ENCODE measurements at regions of chr1 and their contacts with region 1.

Region 1: GRCh38 chr1:157156058-157156541 is 17.9 kb upstream of the ETV3 start:
- DNase-seq: peak; percentile 78 to 88 (median 82)
- ATAC-seq: peak; percentile 84
- H3K4me3 ChIP-seq: peak overlapping the region; percentile 21; the same call in 1 of the 2 replicates
- H3K27ac ChIP-seq: no peak overlapping the region
- H3K4me1 ChIP-seq: peaks cover 29 to 44% of the 10 kb centered on the region in 2 experiments
- H3K27me3 ChIP-seq: peaks cover 9 to 42% of the 10 kb centered on the region in 2 experiments
- CTCF ChIP-seq: peak; percentile 92 to 96 (median 96)
- EP300 ChIP-seq: no peak
- POLR2A ChIP-seq: no peak
- RAD21 ChIP-seq: peak; percentile 98 to 99

Region 2: DNA sequence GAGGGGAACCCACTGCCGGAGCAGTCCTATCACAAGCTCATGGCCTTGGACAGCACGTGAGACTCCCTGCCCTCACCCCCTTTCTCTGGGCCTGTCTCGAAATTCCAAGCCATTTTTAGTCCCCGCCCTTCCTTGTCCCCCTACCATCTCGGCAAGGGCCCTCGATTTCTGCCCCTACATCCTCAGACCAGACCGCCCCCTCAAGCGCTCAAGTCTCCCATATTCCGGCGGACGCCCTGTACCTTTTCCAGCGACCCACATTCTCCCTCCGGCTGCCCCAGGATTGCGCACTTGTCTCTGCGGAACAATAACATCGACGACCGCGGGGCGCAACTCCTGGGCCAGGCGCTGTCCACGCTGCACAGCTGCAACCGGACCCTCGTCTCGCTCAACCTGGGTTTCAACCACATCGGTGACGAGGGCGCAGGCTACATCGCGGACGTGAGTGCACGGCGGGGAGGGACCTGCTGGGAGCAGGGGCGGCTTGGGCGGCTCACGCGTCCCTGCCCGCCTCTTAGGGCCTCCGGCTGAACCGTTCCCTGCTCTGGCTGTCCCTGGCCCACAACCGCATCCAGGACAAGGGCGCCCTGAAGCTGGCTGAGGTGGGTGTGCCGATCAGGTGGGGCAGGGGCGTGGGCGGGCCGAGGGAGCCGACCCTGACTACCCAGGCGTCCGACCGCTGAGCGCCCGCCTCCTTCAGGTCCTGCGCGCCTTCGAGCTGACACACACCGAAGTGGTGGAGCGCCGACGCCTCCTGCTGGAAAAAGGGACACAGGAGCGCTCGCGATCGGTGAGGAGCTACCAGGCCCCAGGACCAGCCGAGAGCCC is 228.7 kb before region 1 on chr1:
- CTCF ChIA-PET with region 1: no interaction called
- POLR2A ChIA-PET with region 1: no interaction called
- in situ Hi-C with region 1: no loop called
- intact Hi-C with region 1: loop called (anchors 5 kb)
- DNase-seq: peak; percentile 74 to 87 (median 78)
- ATAC-seq: peak; percentile 87
- H3K4me3 ChIP-seq: peak overlapping the region; percentile 30; the same call in 1 of the 2 replicates
- H3K27ac ChIP-seq: no peak overlapping the region; the same call in 2 of the 3 replicates
- H3K4me1 ChIP-seq: peaks cover 24 to 33% of the 10 kb centered on the region in 2 experiments
- H3K27me3 ChIP-seq: peaks cover 5 to 6% of the 10 kb centered on the region in 2 experiments; a peak in 2 of 5 replicates
- CTCF ChIP-seq: peak; percentile 77 to 92 (median 81)
- EP300 ChIP-seq: no peak
- POLR2A ChIP-seq: no peak
- RAD21 ChIP-seq: peak; percentile 77 to 78

Region 3: DNA sequence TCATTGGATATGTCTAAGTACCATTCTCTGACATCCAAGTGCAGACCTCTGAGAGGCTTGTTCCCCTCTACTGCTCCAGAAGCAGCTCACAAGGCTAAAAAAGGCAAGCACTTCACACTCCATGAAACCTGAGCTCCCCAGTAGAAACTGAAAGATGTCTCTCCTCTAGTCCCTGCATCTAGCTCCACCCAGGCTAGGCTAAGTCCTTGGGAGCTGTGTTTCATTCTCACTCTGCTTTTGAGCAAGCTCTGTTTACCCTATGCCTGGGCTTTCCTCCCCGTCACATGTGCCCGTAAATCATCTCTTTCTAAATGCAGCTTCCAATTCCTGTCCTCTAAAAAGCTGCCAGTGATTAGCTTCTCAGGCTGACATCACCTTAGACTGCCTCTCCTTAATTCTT is 196.7 kb before region 1 on chr1:
- CTCF ChIA-PET with region 1: no interaction called
- POLR2A ChIA-PET with region 1: no interaction called
- in situ Hi-C with region 1: loop called (anchors 10 kb)
- intact Hi-C with region 1: no loop called
- DNase-seq: peak in 2 of 4 experiments; percentile 43 to 44
- ATAC-seq: peak; percentile 56
- H3K4me3 ChIP-seq: no peak overlapping the region
- H3K27ac ChIP-seq: peak overlapping the region; percentile 23; the same call in 1 of the 3 replicates
- H3K4me1 ChIP-seq: peaks cover 15 to 41% of the 10 kb centered on the region in 2 experiments
- H3K27me3 ChIP-seq: no peaks in the 10 kb centered on the region
- CTCF ChIP-seq: no peak
- EP300 ChIP-seq: no peak
- POLR2A ChIP-seq: no peak
- RAD21 ChIP-seq: no peak

Region 4: DNA sequence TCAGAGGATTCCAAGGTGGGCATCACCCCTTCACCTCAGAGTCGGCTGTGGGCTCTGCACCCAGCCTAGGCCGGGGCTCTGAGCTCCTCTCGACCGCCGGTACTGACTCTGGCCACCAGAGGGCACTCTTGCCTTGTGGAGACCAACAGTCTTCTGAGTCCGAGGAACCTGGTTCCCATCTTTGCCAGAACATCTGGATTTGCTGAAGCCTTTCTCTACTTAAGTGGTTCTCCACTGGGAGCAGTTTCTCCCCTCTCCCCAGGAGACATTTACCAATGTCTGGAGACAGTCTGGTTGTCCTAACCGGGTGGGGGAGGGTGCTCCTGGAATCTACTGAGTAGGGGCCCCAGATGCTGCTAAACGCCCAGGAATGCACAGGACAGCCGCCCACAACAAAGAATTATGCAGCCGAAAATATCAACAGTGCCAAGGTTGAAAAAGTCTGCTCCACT is 65.9 kb before region 1 on chr1:
- CTCF ChIA-PET with region 1: interaction called, 133 read pairs
- POLR2A ChIA-PET with region 1: interaction called, 14 read pairs
- in situ Hi-C with region 1: no loop called
- intact Hi-C with region 1: loop called (anchors 1 kb)
- DNase-seq: peak; percentile 81 to 88 (median 87)
- ATAC-seq: peak; percentile 96
- H3K4me3 ChIP-seq: no peak overlapping the region
- H3K27ac ChIP-seq: no peak overlapping the region
- H3K4me1 ChIP-seq: peaks cover 2 to 4% of the 10 kb centered on the region in 2 experiments; a peak in 2 of 5 replicates
- H3K27me3 ChIP-seq: no peaks in the 10 kb centered on the region
- CTCF ChIP-seq: peak; percentile 92 to 96 (median 95)
- EP300 ChIP-seq: no peak
- POLR2A ChIP-seq: no peak
- RAD21 ChIP-seq: peak; percentile 98 to 99

Region 5: DNA sequence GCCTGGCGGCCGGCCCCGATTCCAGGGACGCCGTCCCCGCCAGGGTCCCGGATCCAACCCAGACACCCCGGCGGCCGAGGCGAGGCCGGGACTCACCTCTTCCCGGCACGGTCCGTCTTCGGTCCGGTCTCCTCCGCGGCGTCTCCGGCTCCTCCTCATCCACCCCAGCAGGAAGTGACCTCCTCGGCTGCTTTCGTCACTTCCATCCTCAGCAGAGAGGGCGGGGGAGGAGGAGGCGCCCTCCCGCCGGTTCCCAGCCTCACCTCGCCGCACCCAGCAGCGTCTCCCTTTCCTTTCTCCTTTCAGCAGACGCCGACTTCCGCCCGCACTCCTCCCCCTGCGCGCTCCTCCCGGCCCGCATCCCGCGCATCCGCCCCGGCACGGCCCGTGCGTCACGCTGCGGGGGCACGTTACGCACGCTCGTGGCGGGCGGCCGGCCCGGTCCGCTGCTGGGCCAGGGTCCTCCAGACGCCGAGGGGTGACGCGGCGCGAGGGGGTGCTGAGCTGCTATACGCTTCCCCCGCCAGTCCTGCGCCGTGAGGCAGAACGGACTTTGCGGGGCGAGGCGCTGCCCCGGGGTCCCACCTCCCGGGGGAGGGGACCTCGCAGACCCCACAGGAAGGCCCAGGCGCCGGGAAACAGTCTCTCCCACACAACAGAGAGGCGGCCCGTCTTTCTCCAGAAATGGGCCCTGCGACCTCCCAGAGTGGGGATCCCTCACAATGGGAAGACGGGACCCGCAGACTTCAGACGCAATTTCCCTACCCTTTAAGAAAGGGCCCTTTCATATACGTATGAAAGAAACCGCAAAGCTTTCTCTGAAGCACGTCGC is 17.7 kb before region 1 on chr1 and contains the start of gene ETV3:
- CTCF ChIA-PET with region 1: no interaction called
- POLR2A ChIA-PET with region 1: interaction called, 7 read pairs
- in situ Hi-C with region 1: no loop called
- intact Hi-C with region 1: loop called (anchors 1 kb)
- DNase-seq: peak; percentile 90 to 95 (median 91)
- ATAC-seq: peak; percentile 95
- H3K4me3 ChIP-seq: peak within 1 kb of the TSS; percentile 91
- H3K27ac ChIP-seq: peak within 1 kb of the TSS; percentile 89
- H3K4me1 ChIP-seq: peaks cover 24 to 31% of the 10 kb centered on the region in 2 experiments
- H3K27me3 ChIP-seq: no peaks in the 10 kb centered on the region
- CTCF ChIP-seq: no peak
- EP300 ChIP-seq: peak; percentile 26; the same call in 1 of the 2 replicates
- POLR2A ChIP-seq: peak; percentile 86
- RAD21 ChIP-seq: no peak
- polyA plus RNA-seq, gene ETV3: 3.1 to 5.4 TPM

Region 6: DNA sequence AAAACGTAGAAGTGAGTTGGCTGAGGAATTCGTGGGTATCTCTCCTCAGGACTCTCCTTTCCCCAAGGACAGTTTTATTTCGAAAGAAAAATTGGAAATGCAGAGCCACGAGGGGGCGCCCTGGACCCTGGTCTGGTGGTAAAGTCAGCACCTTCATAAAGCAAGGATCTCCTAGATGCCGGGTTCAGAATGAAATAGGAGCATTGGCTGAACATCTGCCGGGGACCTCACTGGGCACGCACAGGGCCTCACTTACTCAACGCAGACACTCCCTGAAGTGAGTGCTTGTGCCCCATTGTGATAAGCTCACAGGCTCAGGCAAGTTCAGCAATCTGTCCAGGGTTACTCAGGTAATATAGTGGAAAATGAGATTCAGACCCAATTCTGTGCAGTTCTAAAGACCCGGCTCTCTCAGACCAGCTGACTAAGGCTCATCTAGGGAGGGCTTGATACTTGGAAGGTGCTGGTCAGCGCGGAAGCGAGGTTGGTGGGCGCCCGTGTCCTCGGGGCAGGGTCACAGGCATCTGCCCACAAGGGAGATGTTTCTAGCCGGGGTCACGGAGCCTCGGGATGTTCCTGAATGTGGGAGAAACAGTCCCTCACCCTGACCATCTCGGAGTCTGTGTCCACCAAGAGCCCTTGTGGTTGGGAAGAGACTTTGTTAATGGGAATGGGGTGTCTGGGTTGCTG is 37.7 kb after region 1 on chr1:
- CTCF ChIA-PET with region 1: no interaction called
- POLR2A ChIA-PET with region 1: no interaction called
- in situ Hi-C with region 1: no loop called
- intact Hi-C with region 1: no loop called
- DNase-seq: peak; percentile 72 to 83 (median 75)
- ATAC-seq: peak; percentile 66
- H3K4me3 ChIP-seq: no peak overlapping the region
- H3K27ac ChIP-seq: no peak overlapping the region
- H3K4me1 ChIP-seq: peaks cover 2 to 11% of the 10 kb centered on the region in 2 experiments; a peak in 1 of 5 replicates
- H3K27me3 ChIP-seq: peaks cover 11 to 31% of the 10 kb centered on the region in 2 experiments; a peak in 4 of 5 replicates
- CTCF ChIP-seq: peak; percentile 78 to 90 (median 83)
- EP300 ChIP-seq: no peak
- POLR2A ChIP-seq: no peak
- RAD21 ChIP-seq: peak; percentile 74 to 85

Region 7: GRCh38 chr1:157233131-157233530 is 77.0 kb after region 1 on chr1:
- CTCF ChIA-PET with region 1: no interaction called
- POLR2A ChIA-PET with region 1: no interaction called
- in situ Hi-C with region 1: no loop called
- intact Hi-C with region 1: no loop called
- DNase-seq: no peak
- ATAC-seq: no peak
- H3K4me3 ChIP-seq: no peak overlapping the region
- H3K27ac ChIP-seq: no peak overlapping the region
- H3K4me1 ChIP-seq: peaks cover 0 to 14% of the 10 kb centered on the region in 2 experiments; a peak in 4 of 5 replicates
- H3K27me3 ChIP-seq: no peaks in the 10 kb centered on the region
- CTCF ChIP-seq: no peak
- EP300 ChIP-seq: no peak
- POLR2A ChIP-seq: no peak
- RAD21 ChIP-seq: no peak

Region 8: DNA sequence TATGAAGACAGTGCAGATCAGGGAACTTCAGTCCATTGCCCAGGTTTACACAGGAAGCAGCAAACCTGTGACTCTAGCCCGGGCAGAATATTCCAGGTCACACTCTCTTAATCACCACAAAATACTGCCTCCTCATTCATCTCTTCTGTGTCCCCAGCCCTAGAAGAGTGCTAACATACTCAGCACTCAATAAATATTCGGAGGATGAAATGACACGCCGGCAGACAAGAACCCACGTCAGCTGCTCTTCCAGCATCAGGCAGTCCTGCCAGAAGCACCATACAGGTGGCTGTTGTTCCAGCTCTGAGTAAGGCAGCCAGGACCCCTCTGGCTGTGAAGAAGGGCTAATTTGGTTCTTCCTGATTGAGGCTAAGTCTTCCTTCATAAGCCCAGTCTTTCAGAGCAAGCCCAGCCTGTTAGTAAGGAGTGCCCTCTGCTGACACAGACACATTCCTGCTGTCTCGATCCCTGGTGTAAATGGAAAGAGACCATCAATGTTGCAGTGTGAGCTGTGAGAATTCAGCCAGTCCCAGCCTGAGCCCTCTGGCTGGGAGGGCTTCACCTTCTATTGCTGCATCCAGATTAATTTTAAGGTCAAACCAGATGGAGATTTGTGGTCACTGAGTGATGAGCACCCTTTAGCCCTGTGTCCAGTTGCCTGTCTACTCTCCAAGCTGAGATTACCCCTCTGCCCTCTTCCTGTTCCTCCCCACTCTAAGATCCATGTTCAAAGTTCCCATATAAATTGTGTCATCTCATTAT is 792.4 kb after region 1 on chr1:
- CTCF ChIA-PET with region 1: no interaction called
- POLR2A ChIA-PET with region 1: no interaction called
- in situ Hi-C with region 1: loop called (anchors 25 kb)
- intact Hi-C with region 1: no loop called
- DNase-seq: peak in 1 of 4 experiments; percentile 32
- ATAC-seq: peak; percentile 67
- H3K4me3 ChIP-seq: no peak overlapping the region
- H3K27ac ChIP-seq: no peak overlapping the region
- H3K4me1 ChIP-seq: no peaks in the 10 kb centered on the region
- H3K27me3 ChIP-seq: peaks cover 4 to 5% of the 10 kb centered on the region in 2 experiments; a peak in 4 of 5 replicates
- CTCF ChIP-seq: peak; percentile 48 to 73 (median 51)
- EP300 ChIP-seq: no peak
- POLR2A ChIP-seq: no peak
- RAD21 ChIP-seq: peak; percentile 74 to 82

Region 9: GRCh38 chr1:158163000-158163947 is 1007.2 kb after region 1 on chr1:
- CTCF ChIA-PET with region 1: no interaction called
- POLR2A ChIA-PET with region 1: no interaction called
- in situ Hi-C with region 1: no loop called
- intact Hi-C with region 1: no loop called
- DNase-seq: no peak
- ATAC-seq: no peak
- H3K4me3 ChIP-seq: no peak overlapping the region
- H3K27ac ChIP-seq: no peak overlapping the region
- H3K4me1 ChIP-seq: no peaks in the 10 kb centered on the region
- H3K27me3 ChIP-seq: no peaks in the 10 kb centered on the region
- CTCF ChIP-seq: no peak
- EP300 ChIP-seq: no peak
- POLR2A ChIP-seq: no peak
- RAD21 ChIP-seq: no peak

Measured in K562 (cell line).